ENCODE measurements at regions of chr11 and their contacts with region 1.

Region 1: GRCh38 chr11:123054301-123055065 is 7.5 kb downstream of the HSPA8 start:
- DNase-seq: no peak
- ATAC-seq: peak; percentile 62
- H3K4me3 Mint-ChIP-seq: no peak overlapping the region
- H3K27ac Mint-ChIP-seq: peak overlapping the region; percentile 82
- H3K4me1 Mint-ChIP-seq: peaks cover 21% of the 10 kb centered on the region
- H3K27me3 Mint-ChIP-seq: no peaks in the 10 kb centered on the region
- CTCF ChIP-seq: peak; percentile 52; the same call in 1 of the 2 replicates

Region 2: GRCh38 chr11:122863704-122864326 is 190.7 kb before region 1 on chr11:
- CTCF ChIA-PET with region 1: interaction called, 31 read pairs
- POLR2A ChIA-PET with region 1: no interaction called
- DNase-seq: peak; percentile 47
- ATAC-seq: no peak
- H3K4me3 Mint-ChIP-seq: no peak overlapping the region
- H3K27ac Mint-ChIP-seq: no peak overlapping the region
- H3K4me1 Mint-ChIP-seq: no peaks in the 10 kb centered on the region; the same call in 1 of the 2 replicates
- H3K27me3 Mint-ChIP-seq: no peaks in the 10 kb centered on the region
- CTCF ChIP-seq: peak; percentile 44; the same call in 1 of the 2 replicates

Region 3: GRCh38 chr11:122904090-122904489 is 150.4 kb before region 1 on chr11:
- CTCF ChIA-PET with region 1: interaction called, 17 read pairs
- POLR2A ChIA-PET with region 1: no interaction called
- DNase-seq: no peak
- ATAC-seq: no peak
- H3K4me3 Mint-ChIP-seq: no peak overlapping the region
- H3K27ac Mint-ChIP-seq: peak overlapping the region; percentile 57
- H3K4me1 Mint-ChIP-seq: peaks cover 6% of the 10 kb centered on the region
- H3K27me3 Mint-ChIP-seq: no peaks in the 10 kb centered on the region
- CTCF ChIP-seq: no peak

Region 4: DNA sequence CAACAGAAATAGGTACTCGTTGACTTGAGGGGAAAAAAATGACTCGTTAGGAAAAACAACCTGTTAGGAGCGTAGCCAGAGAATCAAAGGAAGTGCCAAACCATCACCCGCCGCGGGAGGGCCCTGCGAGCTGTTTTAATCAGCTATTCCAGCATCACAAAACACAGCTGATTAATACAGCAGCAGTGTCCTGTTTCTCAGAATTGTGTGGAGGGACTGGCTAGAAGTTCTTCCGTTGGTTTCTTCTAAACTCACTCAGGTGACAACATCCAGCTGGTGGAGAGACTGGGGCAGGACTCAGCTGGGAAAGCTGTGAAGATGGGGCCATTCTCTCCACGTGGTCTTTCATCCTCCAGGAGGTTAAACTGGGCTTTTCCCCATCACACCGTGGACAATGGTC is 20.6 kb before region 1 on chr11:
- CTCF ChIA-PET with region 1: interaction called, 27 read pairs
- POLR2A ChIA-PET with region 1: no interaction called
- DNase-seq: no peak
- ATAC-seq: no peak
- H3K4me3 Mint-ChIP-seq: no peak overlapping the region
- H3K27ac Mint-ChIP-seq: no peak overlapping the region
- H3K4me1 Mint-ChIP-seq: peaks cover 13% of the 10 kb centered on the region
- H3K27me3 Mint-ChIP-seq: no peaks in the 10 kb centered on the region; the same call in 1 of the 2 replicates
- CTCF ChIP-seq: no peak

Region 5: GRCh38 chr11:123103326-123103980 is 49.0 kb after region 1 on chr11:
- CTCF ChIA-PET with region 1: interaction called, 11 read pairs
- POLR2A ChIA-PET with region 1: no interaction called
- DNase-seq: peak; percentile 22
- ATAC-seq: peak; percentile 65
- H3K4me3 Mint-ChIP-seq: no peak overlapping the region
- H3K27ac Mint-ChIP-seq: 0 out of 2 replicates have a peak overlapping the region, but pooled peaks have one; percentile 41
- H3K4me1 Mint-ChIP-seq: peaks cover 27% of the 10 kb centered on the region
- H3K27me3 Mint-ChIP-seq: no peaks in the 10 kb centered on the region
- CTCF ChIP-seq: peak; percentile 46

Region 6: GRCh38 chr11:123268118-123268517 is 213.6 kb after region 1 on chr11:
- CTCF ChIA-PET with region 1: no interaction called
- POLR2A ChIA-PET with region 1: no interaction called
- DNase-seq: no peak
- ATAC-seq: no peak
- H3K4me3 Mint-ChIP-seq: no peak overlapping the region
- H3K27ac Mint-ChIP-seq: no peak overlapping the region
- H3K4me1 Mint-ChIP-seq: no peaks in the 10 kb centered on the region; the same call in 1 of the 2 replicates
- H3K27me3 Mint-ChIP-seq: no peaks in the 10 kb centered on the region; the same call in 1 of the 2 replicates
- CTCF ChIP-seq: no peak

Measured in WTC11 (cell line).